ENCODE measurements at regions of chr1 and their contacts with region 1.

Region 1: DNA sequence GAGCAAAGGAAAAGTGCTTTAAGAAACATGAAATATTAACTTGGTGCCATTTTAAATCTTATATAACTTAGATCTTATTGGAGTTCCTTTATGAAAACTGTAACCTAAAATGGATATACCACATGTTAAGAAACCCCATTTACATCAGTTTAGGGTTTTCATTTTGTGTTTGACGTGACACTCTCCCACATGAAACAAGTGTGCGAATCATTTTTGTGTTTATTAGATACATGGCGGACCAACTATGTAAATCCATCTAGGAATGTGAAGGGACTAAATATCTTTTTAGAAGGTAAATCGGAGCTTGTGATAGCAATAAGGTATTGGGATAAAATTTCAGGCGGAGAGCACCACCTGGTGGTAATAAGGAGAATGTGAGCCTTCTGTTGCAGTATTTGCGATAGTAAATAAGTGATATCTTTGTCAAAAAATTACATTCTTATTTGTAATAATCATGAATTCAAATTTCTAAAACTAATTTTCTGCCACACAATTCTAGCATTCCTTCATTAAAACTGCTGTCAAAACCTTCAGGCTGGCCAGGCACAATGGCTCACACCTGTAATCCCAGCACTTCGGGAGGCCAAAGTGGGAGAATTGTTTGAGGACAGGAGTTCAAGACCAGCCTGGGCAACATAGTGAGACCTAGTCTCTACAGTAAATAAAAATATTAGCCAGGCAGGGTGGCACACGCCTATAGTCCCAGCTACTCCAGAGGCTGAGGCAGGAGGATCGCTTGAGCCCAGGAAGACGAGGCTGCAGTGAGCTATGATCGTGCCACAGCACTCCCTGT is 31.3 kb downstream of the SMAP2 start:
- DNase-seq: peak; percentile 50 to 80 (median 54)
- ATAC-seq: peak; percentile 69
- H3K4me3 ChIP-seq: no peak overlapping the region
- H3K27ac ChIP-seq: no peak overlapping the region
- H3K4me1 ChIP-seq: peaks cover 8 to 25% of the 10 kb centered on the region in 2 experiments
- H3K27me3 ChIP-seq: no peaks in the 10 kb centered on the region
- CTCF ChIP-seq: peak; percentile 56 to 92 (median 75); a peak in 5 of 6 replicates
- EP300 ChIP-seq: no peak
- POLR2A ChIP-seq: no peak
- RAD21 ChIP-seq: peak; percentile 95 to 98

Region 2: DNA sequence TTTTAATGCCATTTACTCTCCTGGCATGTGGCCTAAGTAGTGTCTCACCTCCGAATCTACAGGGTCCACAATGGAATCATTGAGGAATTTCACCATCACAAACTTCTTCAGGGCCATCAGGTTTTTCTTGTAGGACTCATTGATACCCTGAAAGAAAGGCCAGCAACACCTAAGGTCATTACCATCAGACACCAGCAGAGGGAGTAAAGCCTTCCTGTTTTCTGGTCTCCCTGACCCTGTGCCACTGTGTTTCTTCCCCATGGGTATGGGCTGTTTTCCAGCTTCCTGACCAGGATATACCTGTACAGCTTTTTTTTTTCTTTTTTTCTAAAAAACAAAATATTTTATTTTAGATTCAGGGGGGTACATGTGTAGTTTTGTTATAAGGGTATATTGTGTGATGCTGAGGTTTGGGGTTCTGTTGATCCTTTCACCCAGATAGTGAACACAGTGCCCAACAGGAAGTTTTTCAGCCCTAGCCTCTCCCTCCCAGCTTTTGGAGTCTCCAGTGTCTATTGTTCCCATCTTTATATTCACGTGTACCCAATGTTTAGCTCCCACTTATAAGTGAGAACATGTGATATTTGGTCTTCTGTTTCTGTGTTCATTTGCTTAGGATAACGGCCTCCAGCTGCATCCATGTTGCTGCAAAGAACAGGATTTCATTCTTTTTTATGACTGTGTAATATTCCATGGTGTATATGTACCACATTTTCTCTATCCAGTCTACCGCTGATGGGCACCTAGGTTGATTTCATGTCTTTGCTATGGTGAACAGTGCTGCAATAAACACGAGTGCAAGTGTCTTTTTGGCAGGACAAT is 326.1 kb before region 1 on chr1:
- CTCF ChIA-PET with region 1: interaction called, 9 read pairs
- POLR2A ChIA-PET with region 1: no interaction called
- in situ Hi-C with region 1: loop called (anchors 5 kb)
- intact Hi-C with region 1: loop called (anchors 5 kb)
- DNase-seq: peak; percentile 69 to 81 (median 72)
- ATAC-seq: peak; percentile 91
- H3K4me3 ChIP-seq: no peak overlapping the region
- H3K27ac ChIP-seq: no peak overlapping the region
- H3K4me1 ChIP-seq: peaks cover 0 to 13% of the 10 kb centered on the region in 2 experiments; a peak in 3 of 5 replicates
- H3K27me3 ChIP-seq: no peaks in the 10 kb centered on the region
- CTCF ChIP-seq: peak; percentile 80 to 82 (median 80)
- EP300 ChIP-seq: no peak
- POLR2A ChIP-seq: no peak
- RAD21 ChIP-seq: peak; percentile 56 to 66

Region 3: DNA sequence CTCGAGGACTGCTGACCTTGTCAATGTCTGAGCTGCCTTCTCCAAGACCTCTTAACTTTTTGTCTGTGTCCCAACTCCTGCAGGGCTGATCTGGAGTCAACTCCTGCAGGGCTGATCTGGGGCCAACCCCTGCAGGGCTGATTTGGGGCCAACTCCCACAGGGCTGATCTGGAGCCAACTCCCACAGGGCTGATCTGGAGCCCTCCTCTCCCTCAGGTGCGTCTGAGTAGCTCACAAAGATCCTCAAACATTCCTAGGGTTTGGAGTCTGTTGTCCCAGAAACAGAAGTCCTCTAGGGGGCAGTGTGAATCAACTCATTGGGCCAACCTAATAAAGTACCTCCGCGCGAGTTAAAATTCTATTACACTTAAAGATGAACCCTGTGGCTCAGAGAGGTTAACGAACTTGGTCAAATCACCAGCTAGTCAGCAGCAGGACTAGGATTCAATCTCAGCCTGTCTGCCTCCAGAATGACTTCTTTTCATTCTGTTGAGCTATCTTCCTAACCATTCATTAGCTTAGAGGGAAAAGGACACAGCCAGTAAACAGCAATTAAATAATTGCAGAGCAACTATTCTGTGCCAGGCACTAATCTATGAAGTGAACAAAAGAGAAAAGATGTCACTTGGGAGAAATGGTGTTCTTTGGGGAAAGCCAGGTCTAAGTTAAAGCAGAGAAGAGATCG is 260.8 kb before region 1 on chr1:
- CTCF ChIA-PET with region 1: interaction called, 43 read pairs
- POLR2A ChIA-PET with region 1: interaction called, 4 read pairs
- in situ Hi-C with region 1: no loop called
- intact Hi-C with region 1: loop called (anchors 2 kb)
- DNase-seq: peak; percentile 65 to 86 (median 70)
- ATAC-seq: peak; percentile 97
- H3K4me3 ChIP-seq: no peak overlapping the region
- H3K27ac ChIP-seq: no peak overlapping the region
- H3K4me1 ChIP-seq: no peaks in the 10 kb centered on the region
- H3K27me3 ChIP-seq: peaks cover 0 to 3% of the 10 kb centered on the region in 2 experiments; a peak in 1 of 5 replicates
- CTCF ChIP-seq: peak; percentile 85 to 95 (median 85)
- EP300 ChIP-seq: no peak
- POLR2A ChIP-seq: no peak
- RAD21 ChIP-seq: peak; percentile 90 to 95

Region 4: GRCh38 chr1:40153073-40153770 is 251.6 kb before region 1 on chr1:
- CTCF ChIA-PET with region 1: interaction called, 15 read pairs
- POLR2A ChIA-PET with region 1: no interaction called
- in situ Hi-C with region 1: loop called (anchors 5 kb)
- intact Hi-C with region 1: loop called (anchors 2 kb)
- DNase-seq: peak in 3 of 4 experiments; percentile 25 to 78 (median 31)
- ATAC-seq: peak; percentile 84
- H3K4me3 ChIP-seq: no peak overlapping the region
- H3K27ac ChIP-seq: 0 out of 3 replicates have a peak overlapping the region, but pooled peaks have one; percentile 1
- H3K4me1 ChIP-seq: peaks cover 0 to 4% of the 10 kb centered on the region in 2 experiments; a peak in 4 of 5 replicates
- H3K27me3 ChIP-seq: no peaks in the 10 kb centered on the region
- CTCF ChIP-seq: peak; percentile 69 to 88 (median 86)
- EP300 ChIP-seq: no peak
- POLR2A ChIP-seq: no peak
- RAD21 ChIP-seq: peak; percentile 76 to 93

Region 5: DNA sequence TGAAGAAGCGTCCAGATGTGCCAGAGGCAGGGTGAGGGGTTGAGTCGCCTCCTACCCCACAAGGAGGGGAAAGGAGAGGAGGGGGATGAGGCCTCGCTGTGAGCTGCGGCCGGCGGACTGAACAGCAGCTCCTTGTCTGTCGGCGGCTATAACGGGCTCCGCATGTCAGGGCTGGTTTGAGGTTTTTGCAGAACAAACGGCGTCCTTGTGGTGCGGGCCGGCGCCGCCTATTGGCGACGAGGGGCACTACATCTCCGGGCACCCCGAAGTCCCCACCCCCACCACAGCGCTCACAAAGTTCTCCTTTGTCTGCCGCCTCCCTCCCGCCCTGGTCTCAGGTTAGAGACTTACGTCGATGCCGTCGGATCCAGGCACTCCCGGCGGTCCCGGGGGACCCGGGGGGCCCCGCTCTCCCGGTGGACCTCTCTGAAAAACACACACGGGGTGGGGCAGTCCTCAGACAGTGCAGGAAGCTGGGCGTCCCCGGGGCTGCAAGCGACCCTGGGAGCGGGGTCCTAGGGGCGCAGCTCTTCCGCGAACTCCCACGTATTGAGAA is 89.5 kb before region 1 on chr1:
- CTCF ChIA-PET with region 1: interaction called, 8 read pairs
- POLR2A ChIA-PET with region 1: interaction called, 3 read pairs
- in situ Hi-C with region 1: no loop called
- intact Hi-C with region 1: loop called (anchors 5 kb)
- DNase-seq: peak; percentile 90 to 93 (median 90)
- ATAC-seq: peak; percentile 87
- H3K4me3 ChIP-seq: no peak overlapping the region
- H3K27ac ChIP-seq: peak overlapping the region; percentile 31; the same call in 1 of the 3 replicates
- H3K4me1 ChIP-seq: peaks cover 36 to 67% of the 10 kb centered on the region in 2 experiments
- H3K27me3 ChIP-seq: no peaks in the 10 kb centered on the region
- CTCF ChIP-seq: peak; percentile 93 to 95 (median 95)
- EP300 ChIP-seq: 0 out of 2 replicates have a peak, but pooled peaks have one; percentile 21
- POLR2A ChIP-seq: peak; percentile 43; the same call in 1 of the 2 replicates
- RAD21 ChIP-seq: peak; percentile 64 to 85

Region 6: DNA sequence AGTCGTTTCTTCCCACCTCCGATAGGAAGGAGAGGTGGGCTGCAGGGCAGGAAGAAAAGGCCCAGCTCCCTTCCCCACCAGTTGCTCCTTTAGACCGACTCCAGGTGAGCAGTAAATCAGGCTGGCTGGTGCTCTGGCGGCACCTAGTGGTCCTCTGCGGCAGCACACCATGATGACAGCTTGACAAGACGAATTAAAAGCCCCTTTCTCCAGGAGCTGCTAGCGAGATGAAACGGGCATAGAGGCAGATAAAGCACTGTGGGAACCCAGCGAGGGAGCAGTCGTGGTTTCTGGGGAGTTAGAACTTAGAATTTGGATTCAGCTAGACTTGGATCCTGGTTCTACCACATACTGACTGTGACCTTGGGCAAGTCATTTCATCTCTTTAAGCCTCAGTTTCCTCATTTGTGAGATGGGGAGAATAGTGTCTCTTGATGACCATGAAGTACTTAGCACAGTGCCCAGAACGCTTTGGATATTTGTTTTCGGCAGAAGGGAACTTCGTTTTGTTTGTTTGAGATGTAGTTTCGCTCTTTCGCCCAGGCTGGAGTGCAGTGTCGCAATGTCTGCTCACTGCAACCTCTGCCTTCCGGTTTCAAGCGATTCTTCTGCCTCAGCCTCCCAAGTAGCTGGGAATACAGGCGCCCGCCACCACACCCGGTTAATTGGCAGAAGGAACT is 66.0 kb before region 1 on chr1:
- CTCF ChIA-PET with region 1: interaction called, 11 read pairs
- POLR2A ChIA-PET with region 1: interaction called, 3 read pairs
- in situ Hi-C with region 1: loop called (anchors 5 kb)
- intact Hi-C with region 1: loop called (anchors 2 kb)
- DNase-seq: peak; percentile 82 to 93 (median 84)
- ATAC-seq: peak; percentile 90
- H3K4me3 ChIP-seq: no peak overlapping the region
- H3K27ac ChIP-seq: no peak overlapping the region
- H3K4me1 ChIP-seq: peaks cover 15 to 21% of the 10 kb centered on the region in 2 experiments; a peak in 4 of 5 replicates
- H3K27me3 ChIP-seq: no peaks in the 10 kb centered on the region
- CTCF ChIP-seq: peak; percentile 96 to 100 (median 98)
- EP300 ChIP-seq: no peak
- POLR2A ChIP-seq: no peak
- RAD21 ChIP-seq: peak; percentile 93 to 97

Region 7: DNA sequence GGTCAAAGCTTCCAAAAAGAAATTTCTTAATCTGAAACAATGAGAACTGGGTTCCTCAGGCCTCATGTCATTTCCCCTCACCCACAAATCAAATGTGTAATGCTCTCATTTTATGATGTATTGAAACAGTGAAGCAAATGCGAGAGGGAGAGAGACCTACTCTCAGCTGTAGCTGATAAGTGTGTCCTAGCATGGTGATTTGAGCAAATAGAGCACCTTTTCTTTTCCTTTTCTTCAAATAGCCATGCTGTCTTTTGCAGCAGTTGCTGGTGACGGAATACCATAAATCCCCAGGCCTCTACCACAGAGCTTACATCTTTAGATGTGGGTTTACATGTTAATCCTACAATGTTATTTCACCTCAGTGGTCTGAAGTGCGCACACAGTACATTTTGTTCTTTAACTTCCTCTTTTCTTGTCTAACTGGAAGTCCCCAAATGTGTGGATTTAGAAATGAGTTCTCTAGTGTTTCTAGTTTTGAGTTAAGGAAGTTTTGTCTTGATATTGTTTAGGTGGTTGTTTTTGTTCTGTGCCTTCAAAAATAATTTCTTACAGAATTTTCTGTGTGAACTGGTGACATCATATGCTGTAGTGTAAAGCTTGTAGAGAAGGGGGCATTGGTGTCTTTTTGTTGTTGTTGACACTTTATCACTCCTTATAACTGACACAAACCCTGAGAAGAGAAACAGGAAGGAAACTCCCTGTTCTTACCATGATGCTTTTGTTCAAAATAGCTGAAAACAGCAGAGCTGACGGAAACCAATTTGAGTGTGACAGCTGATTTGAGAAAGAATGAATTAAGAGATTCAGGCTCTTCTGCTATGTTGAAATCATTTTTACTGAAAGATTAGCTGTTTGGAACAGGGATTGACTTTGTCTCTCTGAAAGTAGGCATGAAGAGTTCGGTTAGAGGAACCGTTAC is 19.2 kb before region 1 on chr1:
- CTCF ChIA-PET with region 1: interaction called, 6 read pairs
- POLR2A ChIA-PET with region 1: interaction called, 61 read pairs
- in situ Hi-C with region 1: no loop called
- intact Hi-C with region 1: loop called (anchors 2 kb)
- DNase-seq: peak in 1 of 4 experiments; percentile 60
- ATAC-seq: peak; percentile 13
- H3K4me3 ChIP-seq: peak overlapping the region; percentile 29; the same call in 1 of the 2 replicates
- H3K27ac ChIP-seq: peak overlapping the region; percentile 95
- H3K4me1 ChIP-seq: peaks cover 37 to 75% of the 10 kb centered on the region in 2 experiments
- H3K27me3 ChIP-seq: no peaks in the 10 kb centered on the region
- CTCF ChIP-seq: no peak
- EP300 ChIP-seq: no peak
- POLR2A ChIP-seq: no peak
- RAD21 ChIP-seq: no peak

Measured in K562 (cell line).